Activated CD4-positive, alpha-beta T cell treated with anti-CD3 and anti-CD28 coated beads for 36 hours (primary cell): ENCODE measurements at regions of chr19 and their contacts with region 1.

Region 1: DNA sequence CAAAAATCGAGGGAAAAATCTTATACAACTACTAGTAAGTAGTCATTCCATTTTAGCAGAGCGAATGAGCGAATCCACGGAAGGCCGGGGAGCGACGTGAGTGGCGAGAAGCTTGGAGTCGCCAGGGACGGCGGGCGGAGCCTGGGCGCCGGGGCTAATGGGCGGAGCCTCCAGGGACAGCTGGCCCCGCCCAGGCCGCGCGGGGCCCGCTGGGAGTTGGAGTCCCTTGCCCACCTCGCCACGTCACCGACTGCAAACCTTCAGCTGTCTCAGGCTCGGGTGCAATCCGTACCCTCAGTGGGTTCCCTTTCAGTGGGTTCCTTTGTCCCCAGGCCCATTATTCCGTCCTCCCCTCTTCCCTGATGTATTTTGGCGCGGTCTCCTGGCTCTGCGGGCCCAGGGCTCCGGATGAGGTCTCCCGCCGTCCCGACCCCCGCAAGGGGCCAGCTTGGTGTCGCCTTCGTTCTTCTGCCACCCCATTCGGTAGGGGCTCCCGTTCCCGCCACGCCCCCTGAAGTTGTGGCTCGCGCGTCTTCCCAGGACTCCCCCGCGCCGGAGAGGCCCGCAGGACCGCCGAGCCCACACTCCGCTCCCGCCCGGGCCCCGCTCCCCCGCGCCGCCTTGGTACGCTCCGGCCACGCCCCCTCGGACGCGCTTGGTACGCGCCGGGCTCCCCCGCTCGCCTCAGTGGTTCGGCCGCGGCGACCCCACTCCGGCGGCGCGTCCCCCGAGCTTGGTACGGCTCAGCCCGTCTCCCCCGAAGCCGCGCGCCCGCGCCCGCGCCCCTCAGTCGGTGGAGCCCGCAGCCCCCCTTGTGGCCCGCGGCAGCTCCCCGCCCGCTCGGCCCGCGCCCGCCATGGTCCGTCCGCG is at the start of gene PTOV1:
- DNase-seq: peak; percentile 95
- ATAC-seq: peak; percentile 91
- H3K4me3 Mint-ChIP-seq: peak within 1 kb of the TSS; percentile 85
- H3K27ac Mint-ChIP-seq: peak within 1 kb of the TSS; percentile 91
- H3K4me1 Mint-ChIP-seq: peaks cover 36% of the 10 kb centered on the region
- H3K27me3 Mint-ChIP-seq: no peaks in the 10 kb centered on the region
- total RNA-seq, gene PTOV1: 76.9 to 104 TPM

Region 2: DNA sequence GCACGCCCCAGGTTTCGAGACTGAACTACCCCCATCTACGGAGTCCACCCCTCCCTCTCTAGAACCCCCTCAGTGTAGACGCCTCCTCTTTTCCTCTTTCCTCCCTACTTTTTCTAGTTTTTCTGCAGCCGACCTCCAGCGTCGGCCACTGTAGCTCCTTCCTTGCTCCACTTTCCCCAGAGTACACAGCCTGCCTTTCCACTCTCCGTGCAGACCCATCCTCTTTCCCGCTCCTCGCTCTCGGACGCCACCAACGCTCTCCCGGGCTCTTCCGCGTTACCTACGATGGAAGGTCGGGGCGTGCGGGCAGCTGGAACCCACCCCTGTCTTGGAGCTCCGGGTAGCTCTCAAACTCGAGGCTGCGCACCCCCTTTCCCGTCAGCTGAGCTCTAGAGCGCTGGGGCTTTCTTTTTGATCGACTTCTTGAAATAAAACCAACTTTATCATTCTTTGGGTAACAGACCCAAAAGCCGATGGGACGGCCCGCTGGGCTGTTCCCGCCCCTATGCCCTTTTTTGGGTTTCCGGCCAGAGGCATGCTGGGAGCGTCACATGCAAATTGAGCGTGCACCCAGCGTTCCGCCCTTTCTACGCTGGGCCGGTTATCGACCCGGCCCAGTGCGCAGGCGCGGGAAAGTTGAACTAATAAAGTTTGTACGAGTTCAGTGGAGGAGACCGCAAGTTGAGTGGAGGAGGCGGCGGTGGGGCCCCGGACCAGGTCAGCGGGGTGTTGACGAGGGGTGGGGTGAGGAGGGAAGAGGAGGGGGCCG is 185.2 kb before region 1 on chr19 and contains the starts of genes BCL2L12 and IRF3:
- CTCF ChIA-PET with region 1: no interaction called
- POLR2A ChIA-PET with region 1: interaction called, 3 read pairs
- intact Hi-C with region 1: loop called in 1 of 2 experiments (anchors 1 kb)
- DNase-seq: peak; percentile 100
- ATAC-seq: peak; percentile 86
- H3K4me3 Mint-ChIP-seq: peak within 1 kb of the TSS; percentile 96
- H3K27ac Mint-ChIP-seq: peak within 1 kb of the TSS; percentile 92
- H3K4me1 Mint-ChIP-seq: peaks cover 29% of the 10 kb centered on the region
- H3K27me3 Mint-ChIP-seq: no peaks in the 10 kb centered on the region
- total RNA-seq, gene BCL2L12: 79.6 to 93.8 TPM
- total RNA-seq, gene IRF3: 123 to 125 TPM

Region 3: DNA sequence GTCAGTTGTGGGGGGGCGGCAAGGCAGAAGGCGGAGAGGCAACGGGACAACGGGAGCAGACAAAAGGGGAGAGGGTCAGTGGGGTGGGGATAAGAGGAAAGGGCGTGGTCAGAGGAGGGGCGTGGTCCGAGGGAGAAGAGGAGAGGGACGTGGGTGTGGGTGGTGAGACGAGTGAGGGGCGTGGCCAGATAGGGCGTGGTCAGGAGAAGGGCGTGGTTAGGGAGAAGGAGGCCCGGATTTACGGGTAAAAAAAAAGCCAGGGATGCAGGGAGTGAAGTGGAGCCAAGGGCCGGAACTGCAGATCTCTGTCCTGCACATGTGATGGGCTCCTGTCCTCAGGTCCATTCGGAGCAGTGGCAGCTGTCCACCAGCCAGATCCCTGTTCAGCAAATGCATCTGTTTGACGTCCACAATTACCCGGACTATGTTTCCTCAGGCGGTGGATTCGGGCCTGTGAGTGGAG is 138.3 kb before region 1 on chr19:
- CTCF ChIA-PET with region 1: no interaction called
- POLR2A ChIA-PET with region 1: no interaction called
- intact Hi-C with region 1: loop called in 1 of 2 experiments (anchors 1 kb)
- DNase-seq: no peak
- ATAC-seq: no peak
- H3K4me3 Mint-ChIP-seq: no peak overlapping the region
- H3K27ac Mint-ChIP-seq: no peak overlapping the region
- H3K4me1 Mint-ChIP-seq: peaks cover 6% of the 10 kb centered on the region
- H3K27me3 Mint-ChIP-seq: no peaks in the 10 kb centered on the region

Region 4: DNA sequence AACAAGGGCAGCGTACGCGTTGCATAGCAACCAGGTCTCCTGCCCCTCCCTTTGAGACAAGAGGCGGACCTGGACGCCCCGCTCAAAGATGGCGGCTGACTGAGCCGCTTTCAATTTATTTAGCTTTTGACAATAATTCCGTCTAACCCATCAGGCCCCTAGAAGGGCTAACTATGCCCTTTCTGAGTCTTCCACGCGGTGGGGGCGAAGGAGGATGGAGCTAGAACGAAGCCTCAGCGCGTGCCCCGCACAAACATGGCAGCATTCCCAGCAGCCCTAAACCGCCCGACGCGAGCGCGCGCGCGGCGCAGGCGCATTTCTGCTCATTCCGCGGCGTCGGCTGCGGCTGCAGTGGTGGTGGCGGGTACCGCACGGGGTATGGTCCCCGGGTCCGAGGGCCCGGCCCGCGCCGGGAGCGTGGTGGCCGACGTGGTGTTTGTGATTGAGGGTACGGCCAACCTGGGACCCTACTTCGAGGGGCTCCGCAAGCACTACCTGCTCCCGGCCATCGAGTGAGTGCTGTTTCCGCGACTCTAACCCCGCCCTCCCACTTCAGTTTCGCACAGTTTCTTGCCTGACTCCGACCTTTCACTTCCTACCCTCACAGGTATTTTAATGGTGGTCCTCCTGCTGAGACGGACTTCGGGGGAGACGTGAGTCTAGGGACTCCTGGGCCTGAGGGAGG is 32.6 kb before region 1 on chr19 and contains the start of gene MED25:
- CTCF ChIA-PET with region 1: interaction called, 5 read pairs
- POLR2A ChIA-PET with region 1: interaction called, 3 read pairs
- intact Hi-C with region 1: loop called (anchors 1 to 2 kb)
- DNase-seq: peak; percentile 91
- ATAC-seq: peak; percentile 75
- H3K4me3 Mint-ChIP-seq: peak within 1 kb of the TSS; percentile 87
- H3K27ac Mint-ChIP-seq: peak within 1 kb of the TSS; percentile 99
- H3K4me1 Mint-ChIP-seq: peaks cover 26% of the 10 kb centered on the region
- H3K27me3 Mint-ChIP-seq: no peaks in the 10 kb centered on the region
- total RNA-seq, gene MED25: 39.6 to 49.9 TPM

Region 5: GRCh38 chr19:49869441-49870176 is 18.9 kb after region 1 on chr19:
- CTCF ChIA-PET with region 1: interaction called, 7 read pairs
- POLR2A ChIA-PET with region 1: interaction called, 5 read pairs
- intact Hi-C with region 1: loop called (anchors 1 kb)
- DNase-seq: peak; percentile 94
- ATAC-seq: peak; percentile 87
- H3K4me3 Mint-ChIP-seq: no peak overlapping the region
- H3K27ac Mint-ChIP-seq: no peak overlapping the region
- H3K4me1 Mint-ChIP-seq: peaks cover 39% of the 10 kb centered on the region
- H3K27me3 Mint-ChIP-seq: no peaks in the 10 kb centered on the region

Region 6: GRCh38 chr19:49889687-49890348 is 39.1 kb after region 1 on chr19:
- CTCF ChIA-PET with region 1: no interaction called
- POLR2A ChIA-PET with region 1: no interaction called
- intact Hi-C with region 1: loop called in 1 of 2 experiments (anchors 1 kb)
- DNase-seq: peak; percentile 89
- ATAC-seq: peak; percentile 61
- H3K4me3 Mint-ChIP-seq: peak overlapping the region; percentile 69
- H3K27ac Mint-ChIP-seq: peak overlapping the region; percentile 70
- H3K4me1 Mint-ChIP-seq: peaks cover 16% of the 10 kb centered on the region
- H3K27me3 Mint-ChIP-seq: no peaks in the 10 kb centered on the region